Activated B cell treated with CpG ODN at 0.5 μM for 24 hours (primary cell): ENCODE measurements at regions of chr12 and their contacts with region 1.

Region 1: GRCh38 chr12:77925536-77926108 is 94.9 kb downstream of the NAV3 start:
- DNase-seq: no peak
- ATAC-seq: peak; percentile 68
- H3K4me3 Mint-ChIP-seq: no peak overlapping the region
- H3K27ac Mint-ChIP-seq: no peak overlapping the region
- H3K4me1 Mint-ChIP-seq: peaks cover 1% of the 10 kb centered on the region
- H3K27me3 Mint-ChIP-seq: no peaks in the 10 kb centered on the region
- CTCF ChIP-seq: no peak

Region 2: DNA sequence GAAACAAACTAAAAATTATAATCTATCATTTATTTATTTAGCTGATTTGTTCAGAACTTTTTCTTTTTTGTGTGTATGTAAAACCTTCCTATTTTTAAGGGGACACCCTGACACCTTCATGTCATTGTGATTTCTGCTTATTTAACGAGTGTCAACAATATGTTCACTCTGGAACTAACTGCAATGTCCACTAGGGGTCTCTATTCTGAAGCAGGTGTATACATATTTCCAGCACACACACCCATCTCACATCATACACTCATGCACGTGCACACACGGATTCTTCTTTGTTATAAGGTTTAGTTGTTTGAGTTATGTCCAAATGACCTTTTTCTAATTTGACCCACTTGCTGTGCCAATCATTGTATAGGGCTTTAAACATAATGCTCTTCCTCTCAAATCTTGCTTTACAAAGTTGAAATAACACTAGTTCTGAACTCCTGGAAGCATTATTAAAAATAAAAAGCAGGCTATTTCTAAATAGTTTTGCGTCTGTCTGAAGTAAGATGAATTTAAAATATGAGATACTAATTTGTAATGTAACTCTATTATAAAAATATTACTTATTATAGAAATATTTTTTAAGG is 875.8 kb before region 1 on chr12:
- CTCF ChIA-PET with region 1: interaction called, 3 read pairs
- POLR2A ChIA-PET with region 1: no interaction called
- intact Hi-C with region 1: loop called (anchors 1 kb)
- DNase-seq: no peak
- ATAC-seq: peak; percentile 80
- H3K4me3 Mint-ChIP-seq: no peak overlapping the region
- H3K27ac Mint-ChIP-seq: no peak overlapping the region
- H3K4me1 Mint-ChIP-seq: peaks cover 2% of the 10 kb centered on the region
- H3K27me3 Mint-ChIP-seq: no peaks in the 10 kb centered on the region
- CTCF ChIP-seq: no peak

Region 3: DNA sequence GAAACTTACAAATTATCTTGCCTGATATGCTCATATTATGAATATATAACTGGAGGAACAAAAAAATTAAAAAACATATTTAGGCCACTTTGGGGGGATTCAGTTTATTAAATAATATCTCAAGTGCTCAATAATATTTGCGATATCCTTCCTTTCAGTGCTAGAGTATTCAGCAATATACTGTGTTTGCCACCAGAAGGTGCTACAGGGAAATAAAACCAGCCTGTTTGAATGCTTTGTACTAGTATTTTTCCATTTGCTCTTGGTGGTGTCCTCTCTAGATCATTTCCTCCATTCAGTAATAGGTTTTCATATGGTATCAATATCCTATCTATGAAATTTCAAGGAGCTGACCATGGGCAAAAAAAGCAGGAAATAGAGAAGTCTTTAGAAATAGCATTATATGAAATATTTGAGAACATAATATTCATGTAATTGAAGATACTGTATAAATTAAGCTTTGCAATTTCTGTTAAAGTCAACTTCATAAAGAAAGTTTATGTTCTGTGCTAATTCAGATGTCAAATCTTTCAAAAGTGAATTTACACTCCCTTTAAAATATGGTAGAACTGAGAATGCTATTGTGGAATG is 201.2 kb before region 1 on chr12:
- CTCF ChIA-PET with region 1: interaction called, 4 read pairs
- POLR2A ChIA-PET with region 1: no interaction called
- intact Hi-C with region 1: loop called (anchors 1 kb)
- DNase-seq: no peak
- ATAC-seq: no peak
- H3K4me3 Mint-ChIP-seq: no peak overlapping the region
- H3K27ac Mint-ChIP-seq: no peak overlapping the region
- H3K4me1 Mint-ChIP-seq: no peaks in the 10 kb centered on the region
- H3K27me3 Mint-ChIP-seq: no peaks in the 10 kb centered on the region
- CTCF ChIP-seq: no peak

Region 4: GRCh38 chr12:77861317-77861716 is 64.3 kb before region 1 on chr12:
- CTCF ChIA-PET with region 1: no interaction called
- POLR2A ChIA-PET with region 1: no interaction called
- intact Hi-C with region 1: no loop called
- DNase-seq: no peak
- ATAC-seq: no peak
- H3K4me3 Mint-ChIP-seq: no peak overlapping the region
- H3K27ac Mint-ChIP-seq: no peak overlapping the region
- H3K4me1 Mint-ChIP-seq: no peaks in the 10 kb centered on the region
- H3K27me3 Mint-ChIP-seq: no peaks in the 10 kb centered on the region
- CTCF ChIP-seq: no peak

Region 5: GRCh38 chr12:77882709-77883108 is 42.9 kb before region 1 on chr12:
- CTCF ChIA-PET with region 1: no interaction called
- POLR2A ChIA-PET with region 1: no interaction called
- intact Hi-C with region 1: no loop called
- DNase-seq: no peak
- ATAC-seq: no peak
- H3K4me3 Mint-ChIP-seq: no peak overlapping the region
- H3K27ac Mint-ChIP-seq: no peak overlapping the region
- H3K4me1 Mint-ChIP-seq: no peaks in the 10 kb centered on the region
- H3K27me3 Mint-ChIP-seq: no peaks in the 10 kb centered on the region
- CTCF ChIP-seq: no peak